ENCODE measurements at regions of chr10 and their contacts with region 1.

Region 1: GRCh38 chr10:8577686-8578085 is 523.2 kb downstream of the GATA3 start:
- DNase-seq: no peak
- H3K4me3 Mint-ChIP-seq: no peak overlapping the region
- H3K27ac Mint-ChIP-seq: peak overlapping the region; percentile 89
- H3K4me1 Mint-ChIP-seq: peaks cover 69% of the 10 kb centered on the region
- H3K27me3 Mint-ChIP-seq: no peaks in the 10 kb centered on the region

Region 2: GRCh38 chr10:8365935-8366911 is 211.5 kb before region 1 on chr10:
- intact Hi-C with region 1: loop called (anchors 10 kb)
- DNase-seq: peak; percentile 46
- H3K4me3 Mint-ChIP-seq: peak overlapping the region; percentile 64
- H3K27ac Mint-ChIP-seq: peak overlapping the region; percentile 98
- H3K4me1 Mint-ChIP-seq: peaks cover 69% of the 10 kb centered on the region
- H3K27me3 Mint-ChIP-seq: no peaks in the 10 kb centered on the region

Region 3: DNA sequence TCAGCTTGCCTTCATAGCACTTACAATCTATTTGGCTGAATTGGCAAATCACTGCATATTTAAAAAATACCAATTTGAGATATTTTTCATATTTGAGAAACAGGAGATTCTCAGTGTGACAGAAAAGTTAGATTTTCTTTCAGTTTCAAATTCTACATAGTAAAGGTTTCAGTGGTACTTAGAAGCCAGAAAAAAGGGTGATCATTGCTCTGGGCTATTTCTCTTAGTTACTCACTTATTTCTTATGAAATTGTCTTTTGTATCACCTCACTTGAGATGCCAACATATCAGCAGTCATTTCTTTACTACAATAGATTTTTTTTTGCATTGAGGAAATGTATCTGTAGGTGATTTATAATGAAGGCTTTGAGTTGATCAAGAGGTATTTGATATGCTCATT is 45.0 kb before region 1 on chr10:
- intact Hi-C with region 1: loop called (anchors 2 kb)
- DNase-seq: no peak
- H3K4me3 Mint-ChIP-seq: no peak overlapping the region
- H3K27ac Mint-ChIP-seq: no peak overlapping the region
- H3K4me1 Mint-ChIP-seq: peaks cover 10% of the 10 kb centered on the region
- H3K27me3 Mint-ChIP-seq: no peaks in the 10 kb centered on the region

Region 4: GRCh38 chr10:8778713-8779112 is 201.0 kb after region 1 on chr10:
- intact Hi-C with region 1: loop called (anchors 5 kb)
- DNase-seq: no peak
- H3K4me3 Mint-ChIP-seq: no peak overlapping the region
- H3K27ac Mint-ChIP-seq: peak overlapping the region; percentile 84
- H3K4me1 Mint-ChIP-seq: peaks cover 33% of the 10 kb centered on the region
- H3K27me3 Mint-ChIP-seq: no peaks in the 10 kb centered on the region

Region 5: GRCh38 chr10:8998751-8999150 is 421.1 kb after region 1 on chr10:
- intact Hi-C with region 1: loop called (anchors 10 kb)
- DNase-seq: no peak
- H3K4me3 Mint-ChIP-seq: no peak overlapping the region
- H3K27ac Mint-ChIP-seq: no peak overlapping the region
- H3K4me1 Mint-ChIP-seq: peaks cover 39% of the 10 kb centered on the region
- H3K27me3 Mint-ChIP-seq: no peaks in the 10 kb centered on the region

Region 6: GRCh38 chr10:9294865-9295264 is 717.2 kb after region 1 on chr10:
- intact Hi-C with region 1: loop called (anchors 10 kb)
- DNase-seq: no peak
- H3K4me3 Mint-ChIP-seq: no peak overlapping the region
- H3K27ac Mint-ChIP-seq: peak overlapping the region; percentile 71
- H3K4me1 Mint-ChIP-seq: peaks cover 27% of the 10 kb centered on the region
- H3K27me3 Mint-ChIP-seq: peaks cover 2% of the 10 kb centered on the region

Measured in activated T-helper 2 cell treated with anti-CD3 and anti-CD28 coated beads, Interferon-gamma antibody, Interleukin-2, Interleukin-4, amounts not matched to agents 10 μg/mL and 5 μg/mL and 100 μg/mL, durations not matched to agents 14 hours and 24 hours and 36 hours (primary cell).